Motor neuron (in vitro differentiated cells): ENCODE measurements at regions of chr14 and their contacts with region 1.

Region 1: GRCh38 chr14:77076113-77076631 is 21.9 kb upstream of the CIPC start:
- ATAC-seq: peak in 5 of 8 experiments; percentile 37 to 96 (median 84)
- H3K4me3 ChIP-seq: no peak overlapping the region
- H3K27ac ChIP-seq: no peak overlapping the region
- H3K4me1 ChIP-seq: peaks cover 10 to 14% of the 10 kb centered on the region in 2 donors

Region 2: GRCh38 chr14:76736514-76736913 is 339.7 kb before region 1 on chr14:
- in situ Hi-C with region 1: no loop called
- ATAC-seq: peak in 2 of 8 experiments; percentile 88 to 94
- H3K4me3 ChIP-seq: no peak overlapping the region
- H3K27ac ChIP-seq: no peak overlapping the region
- H3K4me1 ChIP-seq: no peaks in the 10 kb centered on the region

Region 3: GRCh38 chr14:76882651-76883050 is 193.5 kb before region 1 on chr14:
- in situ Hi-C with region 1: loop called in 1 of 9 experiments (anchors 10 kb)
- ATAC-seq: peak in 2 of 8 experiments; percentile 51 to 91
- H3K4me3 ChIP-seq: no peak overlapping the region
- H3K27ac ChIP-seq: no peak overlapping the region
- H3K4me1 ChIP-seq: peaks cover 0 to 4% of the 10 kb centered on the region in 2 donors

Region 4: DNA sequence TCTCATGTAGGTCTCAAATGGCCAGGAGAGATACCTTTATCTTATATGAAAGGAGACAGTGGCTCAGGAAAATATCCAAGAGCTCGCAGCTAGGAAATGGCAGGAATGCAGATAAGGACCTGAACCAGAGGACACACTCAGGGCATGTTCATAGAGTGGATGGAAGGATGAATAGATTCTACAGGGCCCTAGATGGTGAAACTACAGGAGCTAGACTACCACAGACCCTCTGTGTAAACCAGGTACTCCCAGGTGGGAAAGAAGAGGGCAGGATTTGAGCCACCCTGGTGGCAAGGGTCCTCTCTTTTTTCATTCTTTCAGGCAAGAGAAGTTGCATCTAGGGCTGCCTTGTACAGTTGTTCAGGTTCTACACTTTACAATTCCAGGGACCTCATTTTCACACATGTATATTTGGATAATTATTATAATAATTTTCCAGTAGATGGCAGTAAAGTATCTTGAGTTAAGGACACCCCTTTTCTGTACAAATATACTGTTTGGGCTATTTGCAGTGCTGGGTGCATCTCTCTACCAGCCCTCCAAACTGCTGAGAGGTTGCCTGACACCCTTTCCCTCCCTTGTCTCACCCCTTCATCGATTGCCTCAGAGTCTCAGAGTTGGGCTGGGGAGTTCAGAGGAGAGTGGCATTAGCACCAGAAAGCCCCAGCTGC is 75.9 kb after region 1 on chr14:
- in situ Hi-C with region 1: no loop called
- ATAC-seq: peak; percentile 45 to 79 (median 56)
- H3K4me3 ChIP-seq: no peak overlapping the region
- H3K27ac ChIP-seq: no peak overlapping the region
- H3K4me1 ChIP-seq: peaks cover 9 to 11% of the 10 kb centered on the region in 2 donors